A549 (cell line): ENCODE measurements at regions of chr6 and their contacts with region 1.

Region 1: GRCh38 chr6:37314487-37315156 is 39.2 kb upstream of the RNF8 start:
- DNase-seq: peak; percentile 22 to 38
- ATAC-seq: peak; percentile 78 to 86; a peak in 5 of 6 replicates
- H3K4me3 ChIP-seq: no peak overlapping the region
- H3K27ac ChIP-seq: no peak overlapping the region
- H3K4me1 ChIP-seq: no peaks in the 10 kb centered on the region
- CTCF ChIP-seq: peak; percentile 48
- EP300 ChIP-seq: no peak
- POLR2A ChIP-seq: no peak
- RAD21 ChIP-seq: peak; percentile 36 to 57; a peak in 4 of 5 replicates

Region 2: GRCh38 chr6:37222125-37222967 is 92.3 kb before region 1 on chr6:
- CTCF ChIA-PET with region 1: no interaction called
- POLR2A ChIA-PET with region 1: no interaction called
- DNase-seq: peak; percentile 77 to 91
- ATAC-seq: peak; percentile 97 to 98
- H3K4me3 ChIP-seq: peak overlapping the region; percentile 52
- H3K27ac ChIP-seq: peak overlapping the region; percentile 75 to 87
- H3K4me1 ChIP-seq: peaks cover 13% of the 10 kb centered on the region; the same call in 2 of the 3 replicates
- CTCF ChIP-seq: no peak
- EP300 ChIP-seq: no peak
- POLR2A ChIP-seq: peak; percentile 42; the same call in 1 of the 2 replicates
- RAD21 ChIP-seq: no peak

Region 3: DNA sequence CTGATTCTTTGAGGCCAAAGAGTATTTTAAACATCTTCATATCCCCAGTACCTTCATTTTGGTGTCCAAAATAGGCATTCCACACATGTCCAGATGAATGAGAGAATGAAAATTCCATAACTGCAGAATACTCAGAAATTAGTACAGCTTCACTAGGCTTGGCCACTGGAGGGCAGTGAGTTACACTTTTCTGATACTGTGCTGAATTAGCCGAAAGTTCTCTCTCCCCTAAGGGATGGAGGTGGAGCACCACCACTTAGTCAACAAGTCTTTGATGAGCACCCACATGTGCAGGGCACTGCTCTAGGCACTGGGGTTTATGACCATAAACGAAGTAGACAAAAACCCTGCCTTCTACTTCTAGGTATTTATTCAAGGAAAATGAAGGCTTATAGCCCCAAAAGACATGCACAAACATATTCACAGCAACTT is 10.7 kb before region 1 on chr6:
- CTCF ChIA-PET with region 1: interaction called, 19 read pairs
- POLR2A ChIA-PET with region 1: no interaction called
- DNase-seq: peak; percentile 35 to 37
- ATAC-seq: peak; percentile 78 to 86
- H3K4me3 ChIP-seq: no peak overlapping the region
- H3K27ac ChIP-seq: no peak overlapping the region
- H3K4me1 ChIP-seq: no peaks in the 10 kb centered on the region
- CTCF ChIP-seq: peak; percentile 48; the same call in 1 of the 3 replicates
- EP300 ChIP-seq: no peak
- POLR2A ChIP-seq: no peak
- RAD21 ChIP-seq: 0 out of 5 replicates have a peak, but pooled peaks of 1 of the 2 experiments have one; percentile 10